ENCODE measurements at regions of chr17 and their contacts with region 1.

Region 1: DNA sequence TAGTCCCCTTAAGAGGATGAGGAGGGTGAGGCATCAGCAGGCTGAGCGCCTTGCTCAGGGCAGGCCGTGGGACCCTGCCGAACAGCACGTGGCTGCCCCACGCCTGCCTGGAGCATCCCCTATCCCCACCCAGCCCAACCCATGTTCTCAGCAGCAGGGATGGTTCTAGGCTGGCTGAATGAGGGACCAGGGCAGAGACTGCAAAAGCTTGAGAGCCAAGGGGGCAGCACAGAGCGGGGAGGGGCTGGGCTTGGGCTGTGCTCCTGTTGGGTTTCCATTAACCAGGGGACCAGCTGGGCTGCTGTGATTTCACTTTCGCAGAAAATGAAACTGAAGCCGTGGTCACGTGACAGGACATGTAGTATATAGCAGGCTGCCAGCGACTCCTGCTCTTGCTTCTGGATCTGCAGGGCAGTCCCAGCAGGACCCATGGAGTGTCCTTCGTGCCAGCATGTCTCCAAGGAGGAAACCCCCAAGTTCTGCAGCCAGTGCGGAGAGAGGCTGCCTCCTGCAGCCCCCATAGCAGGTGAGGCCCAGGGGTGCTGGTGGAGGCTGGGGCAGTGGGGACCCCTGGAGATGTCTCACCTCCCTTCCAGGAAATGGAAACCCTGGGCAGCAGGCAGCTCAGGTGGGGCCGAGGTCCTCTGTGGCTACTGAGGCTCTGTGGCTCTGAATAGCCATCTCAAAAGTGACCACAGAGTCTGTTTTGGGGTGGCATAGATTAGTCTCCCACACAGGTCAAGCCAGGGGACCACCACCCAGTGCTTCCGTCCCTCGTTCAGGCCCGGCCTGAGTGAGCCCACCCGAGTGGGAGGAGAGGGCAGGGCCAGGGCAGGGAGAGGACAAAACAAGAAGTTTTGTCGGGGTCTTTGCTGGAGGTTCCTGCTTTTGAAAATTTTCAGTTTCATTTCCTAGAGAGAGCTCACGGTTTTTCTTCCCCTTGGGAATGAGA is 2.9 kb downstream of the RNF213 start:
- DNase-seq: peak; percentile 89
- ATAC-seq: peak; percentile 67
- H3K4me3 ChIP-seq: peak overlapping the region; percentile 97
- H3K27ac ChIP-seq: peak overlapping the region; percentile 92
- H3K4me1 ChIP-seq: peaks cover 40% of the 10 kb centered on the region
- H3K27me3 ChIP-seq: no peaks in the 10 kb centered on the region
- CTCF ChIP-seq: peak; percentile 24 to 46 (median 41); a peak in 4 of 6 replicates
- EP300 ChIP-seq: peak; percentile 56 to 78; a peak in 3 of 4 replicates
- POLR2A ChIP-seq: peak; percentile 100
- RAD21 ChIP-seq: no peak

Region 2: GRCh38 chr17:80147035-80147836 is 116.3 kb before region 1 on chr17 and contains the start of gene EIF4A3:
- CTCF ChIA-PET with region 1: interaction called, 3 read pairs
- POLR2A ChIA-PET with region 1: no interaction called
- RAD21 ChIA-PET with region 1: interaction called, 4 read pairs
- SMC1A ChIA-PET with region 1: no interaction called
- in situ Hi-C with region 1: no loop called
- intact Hi-C with region 1: loop called (anchors 1 kb)
- DNase-seq: peak; percentile 98
- ATAC-seq: peak; percentile 93
- H3K4me3 ChIP-seq: peak within 1 kb of the TSS; percentile 92
- H3K27ac ChIP-seq: peak within 1 kb of the TSS; percentile 79
- H3K4me1 ChIP-seq: peaks cover 15% of the 10 kb centered on the region
- H3K27me3 ChIP-seq: no peaks in the 10 kb centered on the region
- CTCF ChIP-seq: peak in 1 of 3 experiments; percentile 10; a peak in 1 of 6 replicates
- EP300 ChIP-seq: no peak
- POLR2A ChIP-seq: peak; percentile 99
- RAD21 ChIP-seq: no peak
- polyA plus RNA-seq, gene EIF4A3: 53.3 to 106 TPM

Region 3: GRCh38 chr17:80219013-80219762 is 44.3 kb before region 1 on chr17:
- CTCF ChIA-PET with region 1: no interaction called
- POLR2A ChIA-PET with region 1: interaction called, 5 read pairs
- RAD21 ChIA-PET with region 1: interaction called, 10 read pairs
- SMC1A ChIA-PET with region 1: interaction called, 4 read pairs
- in situ Hi-C with region 1: no loop called
- intact Hi-C with region 1: no loop called
- DNase-seq: peak; percentile 66
- ATAC-seq: peak; percentile 93
- H3K4me3 ChIP-seq: peak overlapping the region; percentile 94
- H3K27ac ChIP-seq: peak overlapping the region; percentile 75
- H3K4me1 ChIP-seq: peaks cover 4% of the 10 kb centered on the region
- H3K27me3 ChIP-seq: no peaks in the 10 kb centered on the region
- CTCF ChIP-seq: no peak
- EP300 ChIP-seq: peak; percentile 41 to 63; a peak in 2 of 4 replicates
- POLR2A ChIP-seq: no peak
- RAD21 ChIP-seq: no peak

Region 4: GRCh38 chr17:80294210-80294609 is 30.7 kb after region 1 on chr17:
- CTCF ChIA-PET with region 1: no interaction called
- POLR2A ChIA-PET with region 1: no interaction called
- RAD21 ChIA-PET with region 1: no interaction called
- SMC1A ChIA-PET with region 1: no interaction called
- in situ Hi-C with region 1: no loop called
- intact Hi-C with region 1: no loop called
- DNase-seq: no peak
- ATAC-seq: no peak
- H3K4me3 ChIP-seq: no peak overlapping the region
- H3K27ac ChIP-seq: no peak overlapping the region
- H3K4me1 ChIP-seq: no peaks in the 10 kb centered on the region
- H3K27me3 ChIP-seq: no peaks in the 10 kb centered on the region
- CTCF ChIP-seq: no peak
- EP300 ChIP-seq: no peak
- POLR2A ChIP-seq: no peak
- RAD21 ChIP-seq: no peak

Region 5: DNA sequence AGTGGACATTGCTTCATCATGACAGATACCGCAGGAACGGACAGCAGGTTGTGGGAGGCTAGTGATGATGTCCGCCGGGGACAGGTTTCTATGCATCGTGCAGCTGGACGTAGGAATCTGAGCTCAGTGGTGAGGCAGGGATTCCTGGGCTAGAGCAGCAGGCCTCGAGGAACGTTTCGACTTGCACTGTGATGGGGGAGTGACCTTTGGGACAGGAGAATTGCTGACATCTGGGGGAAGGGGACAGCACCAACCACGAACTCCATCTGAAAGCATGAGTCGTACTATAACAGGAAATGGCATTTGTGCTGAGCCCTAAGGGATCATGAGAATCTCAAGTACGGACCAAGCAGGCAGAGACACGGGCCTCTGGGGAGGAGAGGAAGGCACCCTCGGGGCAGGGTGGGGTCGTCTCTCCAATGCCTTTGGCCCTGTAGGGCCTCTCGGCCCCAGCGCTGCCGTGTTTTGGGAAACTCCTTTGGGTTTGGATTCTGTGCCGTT is 85.7 kb after region 1 on chr17:
- CTCF ChIA-PET with region 1: no interaction called
- POLR2A ChIA-PET with region 1: no interaction called
- RAD21 ChIA-PET with region 1: no interaction called
- SMC1A ChIA-PET with region 1: no interaction called
- in situ Hi-C with region 1: no loop called
- intact Hi-C with region 1: no loop called
- DNase-seq: no peak
- ATAC-seq: no peak
- H3K4me3 ChIP-seq: no peak overlapping the region
- H3K27ac ChIP-seq: no peak overlapping the region
- H3K4me1 ChIP-seq: no peaks in the 10 kb centered on the region
- H3K27me3 ChIP-seq: no peaks in the 10 kb centered on the region
- CTCF ChIP-seq: no peak
- EP300 ChIP-seq: no peak
- POLR2A ChIP-seq: no peak
- RAD21 ChIP-seq: no peak

Region 6: GRCh38 chr17:80374732-80375585 is 111.4 kb after region 1 on chr17:
- CTCF ChIA-PET with region 1: no interaction called
- POLR2A ChIA-PET with region 1: no interaction called
- RAD21 ChIA-PET with region 1: no interaction called
- SMC1A ChIA-PET with region 1: no interaction called
- in situ Hi-C with region 1: no loop called
- intact Hi-C with region 1: no loop called
- DNase-seq: no peak
- ATAC-seq: no peak
- H3K4me3 ChIP-seq: no peak overlapping the region
- H3K27ac ChIP-seq: no peak overlapping the region
- H3K4me1 ChIP-seq: no peaks in the 10 kb centered on the region
- H3K27me3 ChIP-seq: no peaks in the 10 kb centered on the region
- CTCF ChIP-seq: no peak
- EP300 ChIP-seq: no peak
- POLR2A ChIP-seq: no peak
- RAD21 ChIP-seq: no peak

Measured in GM12878 (cell line).